Ovary (tissue), 10 donors: ENCODE measurements at regions of chr11 and their contacts with region 1.

Region 1: GRCh38 chr11:100970283-100971164 is 159.1 kb downstream of the PGR start:
- DNase-seq: no peak
- H3K4me3 ChIP-seq: no peak overlapping the region
- H3K27ac ChIP-seq: no peak overlapping the region
- H3K4me1 ChIP-seq: no peaks in the 10 kb centered on the region
- H3K27me3 ChIP-seq: no peaks in the 10 kb centered on the region
- CTCF ChIP-seq: no peak
- EP300 ChIP-seq: no peak
- POLR2A ChIP-seq: no peak

Region 2: GRCh38 chr11:101369835-101370234 is 399.3 kb after region 1 on chr11:
- intact Hi-C with region 1: loop called in 1 of 4 experiments (anchors 5 kb)
- DNase-seq: no peak
- H3K4me3 ChIP-seq: no peak overlapping the region
- H3K27ac ChIP-seq: no peak overlapping the region
- H3K4me1 ChIP-seq: no peaks in the 10 kb centered on the region
- H3K27me3 ChIP-seq: no peaks in the 10 kb centered on the region
- CTCF ChIP-seq: no peak
- EP300 ChIP-seq: no peak
- POLR2A ChIP-seq: no peak

Region 3: GRCh38 chr11:101436511-101437142 is 466.1 kb after region 1 on chr11:
- intact Hi-C with region 1: loop called in 2 of 4 experiments (anchors 10 kb)
- DNase-seq: peak; percentile 41 to 68 (median 56)
- H3K4me3 ChIP-seq: no peak overlapping the region
- H3K27ac ChIP-seq: no peak overlapping the region
- H3K4me1 ChIP-seq: peaks cover 14% of the 10 kb centered on the region
- H3K27me3 ChIP-seq: no peaks in the 10 kb centered on the region
- CTCF ChIP-seq: peak; percentile 41 to 57 (median 44)
- EP300 ChIP-seq: no peak
- POLR2A ChIP-seq: no peak

Region 4: DNA sequence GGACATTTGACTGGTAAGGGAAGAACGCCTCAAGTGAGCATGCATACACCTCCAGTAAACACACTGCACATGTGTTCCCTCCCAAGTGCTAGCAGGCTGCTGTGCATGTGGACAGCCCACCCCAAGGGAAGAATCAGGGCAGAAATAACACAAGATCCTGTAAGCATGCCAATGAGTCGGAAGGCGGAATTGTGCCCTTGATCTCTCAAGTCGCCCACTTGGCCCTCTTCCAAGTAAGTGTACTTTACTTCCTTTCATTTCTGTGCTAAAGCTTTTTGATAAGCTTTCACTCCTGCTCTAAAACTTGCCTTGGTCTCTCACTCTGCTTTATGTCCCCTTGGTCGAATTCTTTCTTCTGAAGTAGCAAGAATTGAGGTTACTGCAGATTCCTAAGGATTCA is 473.6 kb after region 1 on chr11:
- intact Hi-C with region 1: loop called in 2 of 4 experiments (anchors 10 kb)
- DNase-seq: peak in 1 of 5 donors; percentile 41
- H3K4me3 ChIP-seq: no peak overlapping the region
- H3K27ac ChIP-seq: no peak overlapping the region
- H3K4me1 ChIP-seq: peaks cover 19% of the 10 kb centered on the region
- H3K27me3 ChIP-seq: no peaks in the 10 kb centered on the region
- CTCF ChIP-seq: no peak
- EP300 ChIP-seq: no peak
- POLR2A ChIP-seq: no peak